ENCODE measurements at regions of chr4 and their contacts with region 1.

Region 1: GRCh38 chr4:140756319-140757231 is at the start of gene TBC1D9:
- DNase-seq: peak; percentile 53
- H3K4me3 ChIP-seq: peak within 1 kb of the TSS; percentile 80
- H3K27me3 ChIP-seq: no peaks in the 10 kb centered on the region
- CTCF ChIP-seq: peak; percentile 18; the same call in 1 of the 2 replicates
- polyA plus RNA-seq, gene TBC1D9: 12.0 and 12.5 TPM in 2 replicates

Region 2: GRCh38 chr4:140395668-140396067 is 360.9 kb before region 1 on chr4:
- CTCF ChIA-PET with region 1: no interaction called
- POLR2A ChIA-PET with region 1: interaction called, 25 read pairs
- DNase-seq: no peak
- H3K4me3 ChIP-seq: no peak overlapping the region
- H3K27me3 ChIP-seq: no peaks in the 10 kb centered on the region
- CTCF ChIP-seq: no peak

Region 3: GRCh38 chr4:140635606-140636005 is 121.0 kb before region 1 on chr4:
- CTCF ChIA-PET with region 1: no interaction called
- POLR2A ChIA-PET with region 1: no interaction called
- DNase-seq: no peak
- H3K4me3 ChIP-seq: no peak overlapping the region
- H3K27me3 ChIP-seq: no peaks in the 10 kb centered on the region
- CTCF ChIP-seq: peak; percentile 22; the same call in 1 of the 2 replicates

Region 4: DNA sequence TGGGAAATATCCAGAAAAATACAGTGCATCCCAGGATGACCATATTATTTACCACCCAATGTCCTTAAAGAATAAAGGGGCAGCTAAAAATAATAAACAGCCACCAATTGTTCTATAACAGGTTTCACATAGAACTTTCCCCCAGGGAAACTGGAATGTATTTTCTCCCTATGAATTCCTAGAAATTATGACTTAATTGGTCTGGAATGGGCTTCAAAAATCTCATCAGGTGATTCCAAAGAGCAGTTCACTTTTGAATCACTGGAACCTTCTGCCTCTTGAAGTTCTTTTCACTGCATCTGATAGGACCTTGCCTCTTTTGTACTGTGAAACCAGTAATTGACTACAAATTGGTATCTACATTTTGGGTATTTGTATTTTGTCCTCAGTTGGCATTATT is 583.4 kb after region 1 on chr4:
- CTCF ChIA-PET with region 1: no interaction called
- POLR2A ChIA-PET with region 1: no interaction called
- DNase-seq: no peak
- H3K4me3 ChIP-seq: no peak overlapping the region
- H3K27me3 ChIP-seq: no peaks in the 10 kb centered on the region
- CTCF ChIP-seq: no peak

Measured in BJ (cell line).